ENCODE measurements at regions of chr10 and their contacts with region 1.

Region 1: GRCh38 chr10:22325272-22326144 is 4.6 kb downstream of the BMI1 start:
- H3K4me3 Mint-ChIP-seq: peak overlapping the region; percentile 71
- H3K27ac Mint-ChIP-seq: peak overlapping the region; percentile 37
- H3K4me1 Mint-ChIP-seq: peaks cover 21% of the 10 kb centered on the region
- H3K27me3 Mint-ChIP-seq: peaks cover 40% of the 10 kb centered on the region

Region 2: GRCh38 chr10:21525367-21526183 is 799.9 kb before region 1 on chr10 and contains the start of gene SKIDA1:
- intact Hi-C with region 1: loop called (anchors 10 kb)
- H3K4me3 Mint-ChIP-seq: peak within 1 kb of the TSS; percentile 88
- H3K27ac Mint-ChIP-seq: peak within 1 kb of the TSS; percentile 97
- H3K4me1 Mint-ChIP-seq: peaks cover 30% of the 10 kb centered on the region
- H3K27me3 Mint-ChIP-seq: peaks cover 10% of the 10 kb centered on the region

Region 3: GRCh38 chr10:22340362-22341189 is 15.1 kb after region 1 on chr10:
- intact Hi-C with region 1: loop called (anchors 2 kb)
- H3K4me3 Mint-ChIP-seq: peak overlapping the region; percentile 84
- H3K27ac Mint-ChIP-seq: peak overlapping the region; percentile 89
- H3K4me1 Mint-ChIP-seq: peaks cover 30% of the 10 kb centered on the region
- H3K27me3 Mint-ChIP-seq: peaks cover 73% of the 10 kb centered on the region

Measured in dendritic cell treated with granulocyte-macrophage colony-stimulating factor and Interleukin-4, amounts not matched to agents 40 ng/mL and 50 ng/mL, for 4 days (primary cell).